ENCODE measurements at regions of chr12 and their contacts with region 1.

Region 1: GRCh38 chr12:39692258-39692853 is 72.8 kb upstream of the ABCD2 start:
- DNase-seq: no peak
- ATAC-seq: peak; percentile 74
- H3K4me3 ChIP-seq: no peak overlapping the region
- H3K27ac ChIP-seq: no peak overlapping the region
- H3K4me1 ChIP-seq: no peaks in the 10 kb centered on the region
- H3K27me3 ChIP-seq: no peaks in the 10 kb centered on the region
- CTCF ChIP-seq: peak in 1 of 3 experiments; percentile 17; a peak in 2 of 6 replicates
- EP300 ChIP-seq: no peak
- POLR2A ChIP-seq: no peak
- RAD21 ChIP-seq: 0 out of 2 replicates have a peak, but pooled peaks have one; percentile 26

Region 2: DNA sequence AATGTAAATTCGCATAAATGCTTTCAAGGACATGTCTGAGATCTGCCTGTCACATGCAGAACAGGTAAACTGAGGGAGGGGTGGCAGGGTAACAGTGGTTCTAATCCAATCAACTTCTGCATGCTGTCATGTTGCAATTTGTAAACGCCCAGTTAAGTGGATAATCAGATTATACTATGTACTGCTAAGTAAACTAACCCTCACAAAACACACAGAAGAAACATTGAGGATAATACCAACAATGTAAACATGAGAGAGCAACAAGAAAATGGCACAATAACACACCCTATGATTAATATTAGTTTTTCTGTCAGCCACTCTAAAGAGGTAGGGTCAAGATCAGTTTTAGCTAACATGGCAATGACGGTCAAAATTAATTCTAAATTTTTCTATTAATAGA is 373.2 kb before region 1 on chr12:
- CTCF ChIA-PET with region 1: interaction called, 22 read pairs
- POLR2A ChIA-PET with region 1: no interaction called
- RAD21 ChIA-PET with region 1: interaction called, 13 read pairs
- SMC1A ChIA-PET with region 1: interaction called, 4 read pairs
- in situ Hi-C with region 1: loop called (anchors 10 kb)
- intact Hi-C with region 1: loop called (anchors 2 kb)
- DNase-seq: no peak
- ATAC-seq: no peak
- H3K4me3 ChIP-seq: no peak overlapping the region
- H3K27ac ChIP-seq: no peak overlapping the region
- H3K4me1 ChIP-seq: no peaks in the 10 kb centered on the region
- H3K27me3 ChIP-seq: no peaks in the 10 kb centered on the region
- CTCF ChIP-seq: no peak
- EP300 ChIP-seq: no peak
- POLR2A ChIP-seq: no peak
- RAD21 ChIP-seq: no peak

Region 3: DNA sequence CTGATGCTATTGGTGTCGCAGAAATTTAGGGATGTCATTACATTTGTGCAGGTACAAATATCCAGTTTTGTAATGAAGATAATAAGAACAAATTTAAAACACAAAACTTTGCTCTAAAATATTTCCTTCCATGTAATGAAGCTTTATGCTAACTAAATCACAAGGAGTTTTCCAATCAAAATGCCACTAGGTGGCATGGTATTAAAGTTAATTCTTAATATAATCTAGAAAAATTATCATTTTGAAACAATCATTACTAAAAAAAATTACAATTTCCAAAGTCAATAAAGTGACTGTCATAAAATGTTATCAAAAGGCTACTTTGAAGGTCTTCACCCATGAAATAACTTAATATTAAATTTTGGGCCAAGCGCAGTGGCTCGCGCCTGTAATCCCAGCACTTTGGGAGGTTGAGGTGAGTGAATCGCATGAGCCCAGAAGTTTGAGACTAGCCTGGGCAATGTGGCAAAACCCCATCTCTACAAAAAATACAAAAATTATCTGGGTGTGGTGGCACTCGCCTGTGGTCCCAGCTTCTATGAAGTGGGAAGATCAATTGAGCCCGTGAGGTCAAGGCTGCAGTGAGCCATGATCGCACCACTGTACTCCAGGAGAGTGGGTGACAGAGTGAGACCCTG is 326.9 kb before region 1 on chr12:
- CTCF ChIA-PET with region 1: interaction called, 11 read pairs
- POLR2A ChIA-PET with region 1: no interaction called
- RAD21 ChIA-PET with region 1: interaction called, 6 read pairs
- SMC1A ChIA-PET with region 1: interaction called, 9 read pairs
- in situ Hi-C with region 1: no loop called
- intact Hi-C with region 1: no loop called
- DNase-seq: no peak
- ATAC-seq: no peak
- H3K4me3 ChIP-seq: no peak overlapping the region
- H3K27ac ChIP-seq: no peak overlapping the region
- H3K4me1 ChIP-seq: peaks cover 7% of the 10 kb centered on the region; the same call in 1 of the 2 replicates
- H3K27me3 ChIP-seq: no peaks in the 10 kb centered on the region
- CTCF ChIP-seq: no peak; a peak in 1 of 6 replicates
- EP300 ChIP-seq: no peak
- POLR2A ChIP-seq: no peak
- RAD21 ChIP-seq: no peak

Region 4: GRCh38 chr12:39587225-39587624 is 105.1 kb before region 1 on chr12:
- CTCF ChIA-PET with region 1: interaction called, 24 read pairs
- POLR2A ChIA-PET with region 1: no interaction called
- RAD21 ChIA-PET with region 1: interaction called, 14 read pairs
- SMC1A ChIA-PET with region 1: interaction called, 22 read pairs
- in situ Hi-C with region 1: no loop called
- intact Hi-C with region 1: loop called (anchors 1 kb)
- DNase-seq: no peak
- ATAC-seq: peak; percentile 84
- H3K4me3 ChIP-seq: no peak overlapping the region
- H3K27ac ChIP-seq: no peak overlapping the region
- H3K4me1 ChIP-seq: no peaks in the 10 kb centered on the region
- H3K27me3 ChIP-seq: no peaks in the 10 kb centered on the region
- CTCF ChIP-seq: peak; percentile 39 to 79 (median 55); a peak in 4 of 6 replicates
- EP300 ChIP-seq: no peak
- POLR2A ChIP-seq: no peak
- RAD21 ChIP-seq: peak; percentile 50

Region 5: DNA sequence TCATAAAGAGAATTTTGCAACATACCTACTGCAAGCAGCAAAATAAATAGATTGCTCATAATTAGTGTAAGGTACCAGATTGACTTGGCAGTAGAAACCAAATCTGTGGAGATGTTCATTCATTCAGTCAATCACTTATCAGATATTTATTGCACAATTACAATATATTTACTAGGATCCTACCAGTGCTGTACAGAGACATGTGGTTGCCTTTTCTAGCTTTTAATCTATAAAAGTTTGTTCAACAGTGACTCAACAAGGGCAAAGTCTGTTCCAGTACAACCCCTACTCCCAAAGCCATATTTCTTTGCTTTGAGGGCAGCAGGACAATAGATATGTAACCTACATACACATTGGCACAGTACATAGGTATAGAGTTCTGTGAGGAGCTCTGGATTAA is 100.1 kb before region 1 on chr12:
- CTCF ChIA-PET with region 1: interaction called, 24 read pairs
- POLR2A ChIA-PET with region 1: no interaction called
- RAD21 ChIA-PET with region 1: interaction called, 14 read pairs
- SMC1A ChIA-PET with region 1: interaction called, 22 read pairs
- in situ Hi-C with region 1: no loop called
- intact Hi-C with region 1: loop called (anchors 1 kb)
- DNase-seq: no peak
- ATAC-seq: peak; percentile 24; the same call in 2 of the 3 replicates
- H3K4me3 ChIP-seq: no peak overlapping the region
- H3K27ac ChIP-seq: no peak overlapping the region
- H3K4me1 ChIP-seq: no peaks in the 10 kb centered on the region
- H3K27me3 ChIP-seq: no peaks in the 10 kb centered on the region
- CTCF ChIP-seq: no peak
- EP300 ChIP-seq: no peak
- POLR2A ChIP-seq: no peak
- RAD21 ChIP-seq: no peak

Region 6: GRCh38 chr12:39610436-39611025 is 81.8 kb before region 1 on chr12:
- CTCF ChIA-PET with region 1: interaction called, 6 read pairs
- POLR2A ChIA-PET with region 1: no interaction called
- RAD21 ChIA-PET with region 1: interaction called, 13 read pairs
- SMC1A ChIA-PET with region 1: interaction called, 5 read pairs
- in situ Hi-C with region 1: no loop called
- intact Hi-C with region 1: no loop called
- DNase-seq: no peak
- ATAC-seq: no peak
- H3K4me3 ChIP-seq: no peak overlapping the region
- H3K27ac ChIP-seq: no peak overlapping the region
- H3K4me1 ChIP-seq: no peaks in the 10 kb centered on the region
- H3K27me3 ChIP-seq: no peaks in the 10 kb centered on the region
- CTCF ChIP-seq: no peak
- EP300 ChIP-seq: no peak
- POLR2A ChIP-seq: no peak
- RAD21 ChIP-seq: no peak

Region 7: DNA sequence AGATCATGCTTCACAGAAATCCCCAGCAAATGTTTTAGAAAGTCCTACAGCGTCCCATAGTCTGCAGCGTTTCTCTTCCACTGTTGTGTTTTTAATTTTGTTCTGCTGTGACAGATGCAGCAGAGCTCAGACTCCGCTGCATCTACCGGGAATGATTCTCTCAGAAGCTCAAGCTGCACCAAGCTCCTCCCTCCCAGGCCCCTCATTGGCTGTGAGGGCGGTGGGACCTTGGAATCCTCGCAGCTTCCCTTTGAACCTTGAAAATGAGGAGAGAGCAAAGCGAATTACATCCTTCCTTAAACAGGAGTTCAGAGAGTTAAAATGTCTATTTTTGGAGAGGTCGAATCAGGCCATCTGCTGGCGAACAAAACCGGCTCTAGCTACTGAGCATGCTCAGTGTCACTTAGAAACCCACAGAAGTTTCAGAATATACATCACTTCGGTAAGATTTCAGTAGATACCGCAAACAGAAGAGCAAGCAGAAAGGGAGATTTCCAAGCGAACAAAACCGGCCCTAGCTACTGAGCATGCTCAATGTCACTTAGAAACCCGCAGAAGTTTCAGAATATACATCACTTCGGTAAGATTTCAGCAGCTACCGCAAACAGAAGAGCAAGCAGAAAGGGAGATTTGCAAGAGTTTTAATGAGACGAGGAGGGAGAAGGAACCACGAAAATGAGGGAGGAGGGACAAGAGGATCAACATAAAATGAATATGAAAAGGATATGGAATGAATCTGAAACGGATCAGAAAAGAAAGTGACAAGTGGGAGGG is 72.5 kb before region 1 on chr12 and contains the start of gene ABCD2:
- CTCF ChIA-PET with region 1: interaction called, 9 read pairs
- POLR2A ChIA-PET with region 1: no interaction called
- RAD21 ChIA-PET with region 1: interaction called, 27 read pairs
- SMC1A ChIA-PET with region 1: interaction called, 24 read pairs
- in situ Hi-C with region 1: no loop called
- intact Hi-C with region 1: loop called (anchors 2 kb)
- DNase-seq: peak; percentile 97
- ATAC-seq: peak; percentile 62
- H3K4me3 ChIP-seq: peak within 1 kb of the TSS; percentile 95
- H3K27ac ChIP-seq: peak within 1 kb of the TSS; percentile 98
- H3K4me1 ChIP-seq: peaks cover 16% of the 10 kb centered on the region
- H3K27me3 ChIP-seq: no peaks in the 10 kb centered on the region
- CTCF ChIP-seq: peak; percentile 3 to 30 (median 21); a peak in 2 of 6 replicates
- EP300 ChIP-seq: peak; percentile 32 to 86; a peak in 3 of 4 replicates
- POLR2A ChIP-seq: peak; percentile 62
- RAD21 ChIP-seq: no peak
- polyA plus RNA-seq, gene ABCD2: 4.4 to 5.7 TPM